Left cardiac atrium (tissue), 4 donors: ENCODE measurements at regions of chr3 and their contacts with region 1.

Region 1: DNA sequence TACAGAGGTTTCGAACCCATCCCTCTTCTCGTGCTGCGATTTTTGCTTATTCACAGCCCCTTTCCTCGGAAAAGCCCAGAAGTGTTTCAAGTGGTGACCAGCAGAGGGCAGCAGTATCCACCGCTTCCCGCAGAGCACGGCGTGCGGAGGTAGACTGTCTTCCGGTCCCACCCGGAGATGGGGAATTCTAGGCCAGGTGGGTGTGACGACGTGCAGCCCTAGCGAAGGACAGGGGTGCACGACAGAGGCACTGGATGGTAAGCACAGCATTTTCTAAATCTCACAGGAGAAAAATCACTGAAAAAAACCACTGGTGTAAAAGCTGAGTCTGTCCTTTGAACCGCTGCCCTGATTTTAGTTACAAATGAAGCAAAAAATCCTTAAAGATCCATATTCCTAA is 7.4 kb upstream of the PSMD6 start:
- DNase-seq: peak; percentile 76
- ATAC-seq: peak; percentile 89 to 91

Region 2: DNA sequence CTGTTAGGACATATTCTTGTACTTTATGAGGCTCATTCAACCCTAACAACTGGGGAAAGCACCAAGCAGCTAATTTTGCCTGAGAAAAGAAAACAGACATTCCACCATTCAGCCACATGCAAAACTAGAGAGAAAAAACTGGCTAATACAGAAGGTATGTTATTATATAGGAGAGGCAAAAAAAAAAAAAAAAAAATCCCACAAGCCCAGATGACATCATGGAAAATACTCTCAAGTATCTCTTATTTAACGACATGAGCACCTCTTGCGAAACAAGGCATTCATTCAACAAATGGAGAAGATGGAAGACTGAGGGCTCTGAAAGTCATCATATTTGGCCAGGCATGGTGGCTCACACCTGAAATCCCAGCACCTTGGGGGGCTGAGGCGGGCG is 133.0 kb after region 1 on chr3:
- intact Hi-C with region 1: loop called in 1 of 2 experiments (anchors 10 kb)
- DNase-seq: no peak
- ATAC-seq: no peak

Region 3: DNA sequence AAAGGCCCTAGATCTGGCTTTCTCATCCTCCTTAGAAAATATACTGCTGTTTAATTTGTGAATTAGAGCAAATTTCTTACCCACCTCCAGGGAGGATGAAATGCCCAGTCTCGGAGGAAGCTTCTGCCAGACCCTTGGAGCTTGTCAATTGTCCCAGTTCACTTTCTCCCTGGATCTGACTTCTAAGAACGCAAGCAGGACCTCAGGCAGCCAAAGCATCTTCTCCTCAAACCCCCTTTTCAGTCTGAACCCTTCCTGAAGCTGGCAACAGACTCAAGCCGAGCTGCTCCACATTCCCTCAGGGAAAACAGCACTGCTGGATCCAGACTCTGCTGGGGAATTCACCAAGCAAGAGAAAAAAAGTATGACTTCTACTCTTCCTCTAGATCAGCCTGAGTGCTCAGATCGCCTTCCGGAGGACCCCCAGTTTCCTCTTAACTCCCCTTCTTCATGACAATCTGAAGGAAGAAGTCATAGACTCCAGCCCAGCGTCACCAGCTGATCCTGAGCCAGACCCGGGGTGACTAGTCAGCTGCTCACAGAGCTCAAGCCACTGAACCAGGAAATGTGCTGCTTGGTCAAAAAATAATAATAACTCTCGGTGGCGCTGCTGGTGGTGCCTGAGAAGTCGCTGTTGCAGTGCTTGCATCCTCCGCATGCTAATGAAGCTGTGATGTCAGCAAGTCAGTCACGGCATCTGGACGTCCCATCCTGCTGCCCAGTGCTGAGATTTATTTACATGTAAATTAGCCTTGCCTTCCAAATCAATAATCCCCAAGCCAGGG is 194.3 kb after region 1 on chr3 and contains the start of gene PRICKLE2:
- intact Hi-C with region 1: loop called in 1 of 2 experiments (anchors 10 kb)
- DNase-seq: peak; percentile 85
- ATAC-seq: peak; percentile 71 to 81
- total RNA-seq, gene PRICKLE2: 21.0 to 21.9 TPM

Region 4: DNA sequence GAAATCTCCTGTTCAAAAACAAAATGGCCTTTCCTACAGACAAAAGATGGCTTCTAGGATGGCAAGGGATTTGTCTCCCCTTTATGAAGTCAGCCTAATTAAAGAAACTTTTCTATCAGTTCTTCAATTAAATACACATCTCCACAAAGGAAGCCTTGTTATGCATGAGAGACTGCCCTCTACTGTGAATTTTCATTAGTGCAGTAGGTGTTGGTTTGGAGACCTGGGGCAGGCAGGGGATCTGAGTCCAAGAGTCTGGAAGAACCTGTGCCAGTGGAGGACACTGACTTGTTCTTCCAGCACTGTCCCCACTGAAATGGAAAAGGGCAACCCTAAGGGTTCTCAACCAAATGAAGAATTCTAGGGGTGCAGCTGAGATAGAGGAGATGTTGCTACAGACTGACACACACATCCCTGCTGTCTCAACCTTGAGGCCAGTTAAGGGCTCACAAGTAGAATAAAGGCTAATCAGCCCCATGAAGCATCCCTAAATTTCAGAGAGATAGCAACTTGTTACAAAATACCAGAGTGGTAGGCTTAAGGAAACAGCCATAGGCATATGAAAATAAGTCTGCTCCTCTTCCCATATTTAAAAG is 368.6 kb after region 1 on chr3:
- intact Hi-C with region 1: loop called (anchors 2 to 5 kb)
- DNase-seq: peak; percentile 22
- ATAC-seq: peak; percentile 81 to 84

Region 5: GRCh38 chr3:64484289-64484992 is 453.7 kb after region 1 on chr3:
- intact Hi-C with region 1: loop called (anchors 2 to 5 kb)
- DNase-seq: peak; percentile 76
- ATAC-seq: peak; percentile 93 to 95

Region 6: GRCh38 chr3:64489361-64490044 is 458.8 kb after region 1 on chr3:
- intact Hi-C with region 1: loop called (anchors 2 to 5 kb)
- DNase-seq: peak; percentile 26
- ATAC-seq: peak; percentile 67 to 74